ENCODE measurements at regions of chr20 and their contacts with region 1.

Region 1: DNA sequence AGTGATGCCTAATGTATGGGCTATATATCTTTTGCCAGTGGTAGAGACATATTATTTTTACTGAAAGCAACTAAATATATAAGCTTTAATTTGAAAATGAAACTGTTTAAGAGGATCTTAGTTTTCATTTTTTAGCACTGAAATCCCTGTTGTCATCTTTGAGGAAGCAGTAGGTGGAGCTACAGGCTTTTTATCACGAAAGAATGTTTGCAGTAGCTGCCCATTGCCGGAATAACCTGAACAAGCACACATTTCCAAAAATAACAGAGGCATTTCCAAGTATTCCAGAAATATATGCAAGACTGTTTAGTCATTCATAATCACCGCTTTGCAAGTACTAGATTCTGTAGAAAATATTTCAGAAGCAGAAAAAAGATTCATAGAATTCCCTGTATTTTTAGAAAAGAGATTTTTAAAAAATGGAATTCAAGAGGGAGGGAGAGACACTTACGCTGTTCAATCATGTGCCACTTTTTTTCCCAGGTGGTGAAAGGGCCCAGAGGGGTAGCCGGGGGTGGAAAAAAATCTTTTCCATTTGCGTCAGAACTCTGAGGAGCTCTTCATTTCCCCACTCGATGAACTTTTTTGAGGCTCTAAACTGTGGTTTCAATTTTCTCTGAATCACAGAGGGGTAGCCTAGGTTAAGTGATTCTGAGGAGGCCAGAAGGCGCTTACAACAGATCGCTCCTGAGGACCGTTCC is 142.5 kb upstream of the FERMT1 start:
- DNase-seq: peak; percentile 73
- ATAC-seq: peak; percentile 92
- H3K4me3 ChIP-seq: no peak overlapping the region
- H3K27ac ChIP-seq: no peak overlapping the region
- H3K4me1 ChIP-seq: no peaks in the 10 kb centered on the region
- H3K27me3 ChIP-seq: no peaks in the 10 kb centered on the region; the same call in 1 of the 2 replicates
- CTCF ChIP-seq: peak; percentile 67
- POLR2A ChIP-seq: no peak
- RAD21 ChIP-seq: peak; percentile 71

Region 2: DNA sequence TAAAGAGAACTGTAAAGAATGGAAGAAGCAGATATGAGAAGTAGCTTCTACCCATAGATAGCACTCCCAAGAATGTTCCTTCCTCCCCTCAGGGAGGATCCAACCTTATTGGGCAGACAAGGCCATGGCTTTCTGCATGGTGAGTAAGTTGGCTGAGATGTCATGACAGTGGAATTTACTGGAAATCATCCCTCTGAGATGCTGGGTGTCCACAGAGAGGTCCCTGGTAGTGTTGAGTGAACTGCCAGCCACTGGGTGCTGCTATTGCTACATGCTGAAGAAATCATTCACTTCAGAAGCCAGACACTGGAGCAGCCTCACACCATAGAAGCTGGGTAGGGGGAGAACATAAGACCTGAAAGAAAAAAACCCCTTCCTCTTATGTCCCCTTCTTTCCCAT is 96.1 kb before region 1 on chr20:
- CTCF ChIA-PET with region 1: no interaction called
- POLR2A ChIA-PET with region 1: no interaction called
- dilution Hi-C with region 1: no loop called
- in situ Hi-C with region 1: no loop called
- intact Hi-C with region 1: no loop called
- DNase-seq: peak; percentile 12
- ATAC-seq: 0 out of 2 replicates have a peak, but pooled peaks have one; percentile 27
- H3K4me3 ChIP-seq: no peak overlapping the region
- H3K27ac ChIP-seq: no peak overlapping the region
- H3K4me1 ChIP-seq: no peaks in the 10 kb centered on the region
- H3K27me3 ChIP-seq: no peaks in the 10 kb centered on the region; the same call in 1 of the 2 replicates
- CTCF ChIP-seq: 0 out of 2 replicates have a peak, but pooled peaks have one; percentile 14
- POLR2A ChIP-seq: no peak
- RAD21 ChIP-seq: peak; percentile 20; the same call in 1 of the 2 replicates

Region 3: DNA sequence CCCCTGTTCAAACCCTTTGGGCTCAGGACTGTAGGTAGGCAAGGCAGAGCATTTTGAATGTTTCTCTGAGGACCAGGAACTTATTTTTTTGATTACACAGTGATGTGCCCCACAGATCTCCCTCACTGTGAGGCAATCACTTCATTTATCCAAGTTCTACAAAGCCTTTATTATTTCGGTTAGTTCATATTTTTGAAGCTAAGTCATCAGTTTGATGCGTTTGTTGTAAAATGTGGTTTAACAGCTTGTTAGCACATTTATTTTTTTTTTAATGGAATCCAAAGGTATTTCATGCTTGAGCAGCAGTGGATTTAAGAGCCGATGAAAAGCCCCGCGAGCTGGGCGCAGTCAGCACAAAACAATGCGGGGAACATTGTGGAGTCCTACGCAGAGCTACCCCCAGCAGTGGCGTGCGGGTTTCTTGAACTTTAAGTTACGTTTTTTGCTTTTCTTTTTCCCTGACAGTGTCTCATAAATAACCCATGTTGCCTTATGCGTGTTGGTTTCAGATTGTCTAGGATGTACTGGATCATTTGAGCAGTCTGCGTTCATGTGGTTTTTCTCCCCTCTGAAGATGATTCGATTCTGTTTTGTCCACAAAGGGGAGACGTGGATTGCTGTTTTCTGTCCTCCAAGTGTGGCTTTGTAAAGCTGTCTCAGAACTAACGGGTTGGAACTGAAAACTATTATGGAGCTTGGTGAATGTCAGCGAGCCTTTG is 268.6 kb after region 1 on chr20:
- CTCF ChIA-PET with region 1: interaction called, 5 read pairs
- POLR2A ChIA-PET with region 1: no interaction called
- dilution Hi-C with region 1: no loop called
- in situ Hi-C with region 1: no loop called
- intact Hi-C with region 1: loop called (anchors 1 kb)
- DNase-seq: peak; percentile 88
- ATAC-seq: peak; percentile 85
- H3K4me3 ChIP-seq: peak overlapping the region; percentile 51
- H3K27ac ChIP-seq: peak overlapping the region; percentile 90
- H3K4me1 ChIP-seq: peaks cover 7% of the 10 kb centered on the region
- H3K27me3 ChIP-seq: no peaks in the 10 kb centered on the region
- CTCF ChIP-seq: 0 out of 2 replicates have a peak, but pooled peaks have one; percentile 3
- POLR2A ChIP-seq: no peak
- RAD21 ChIP-seq: peak; percentile 13; the same call in 1 of the 2 replicates

Region 4: GRCh38 chr20:6583134-6583738 is 317.9 kb after region 1 on chr20:
- CTCF ChIA-PET with region 1: no interaction called
- POLR2A ChIA-PET with region 1: no interaction called
- dilution Hi-C with region 1: no loop called
- in situ Hi-C with region 1: no loop called
- intact Hi-C with region 1: loop called (anchors 1 kb)
- DNase-seq: peak; percentile 55
- ATAC-seq: peak; percentile 93
- H3K4me3 ChIP-seq: no peak overlapping the region
- H3K27ac ChIP-seq: no peak overlapping the region
- H3K4me1 ChIP-seq: peaks cover 6% of the 10 kb centered on the region
- H3K27me3 ChIP-seq: no peaks in the 10 kb centered on the region
- CTCF ChIP-seq: peak; percentile 71
- POLR2A ChIP-seq: no peak
- RAD21 ChIP-seq: peak; percentile 68

Region 5: GRCh38 chr20:6636209-6637159 is 371.1 kb after region 1 on chr20:
- CTCF ChIA-PET with region 1: no interaction called
- POLR2A ChIA-PET with region 1: no interaction called
- dilution Hi-C with region 1: no loop called
- in situ Hi-C with region 1: no loop called
- intact Hi-C with region 1: loop called (anchors 1 kb)
- DNase-seq: peak; percentile 69
- ATAC-seq: peak; percentile 87
- H3K4me3 ChIP-seq: no peak overlapping the region
- H3K27ac ChIP-seq: no peak overlapping the region
- H3K4me1 ChIP-seq: no peaks in the 10 kb centered on the region
- H3K27me3 ChIP-seq: peaks cover 8% of the 10 kb centered on the region
- CTCF ChIP-seq: peak; percentile 66
- POLR2A ChIP-seq: no peak
- RAD21 ChIP-seq: peak; percentile 64

Region 6: DNA sequence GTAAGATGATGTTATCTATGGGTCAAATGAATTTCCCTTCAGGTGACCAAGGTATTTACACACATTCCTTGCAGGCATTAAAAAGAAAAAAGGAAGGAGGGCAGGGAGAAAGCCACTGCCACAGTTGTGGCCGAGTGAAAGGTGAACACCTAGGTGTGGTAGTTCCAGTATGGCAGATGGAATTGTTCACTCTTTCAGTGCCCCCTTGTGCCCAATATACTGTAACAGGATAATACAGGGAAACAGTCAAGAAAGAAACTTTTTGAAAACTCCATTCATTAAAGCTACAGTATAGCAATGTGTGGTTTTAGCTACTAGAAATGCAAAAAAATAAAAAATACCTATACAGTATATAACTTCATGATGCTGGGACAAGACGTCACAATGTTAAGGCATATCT is 554.3 kb after region 1 on chr20:
- CTCF ChIA-PET with region 1: no interaction called
- POLR2A ChIA-PET with region 1: no interaction called
- dilution Hi-C with region 1: no loop called
- in situ Hi-C with region 1: no loop called
- intact Hi-C with region 1: loop called (anchors 5 kb)
- DNase-seq: no peak
- ATAC-seq: no peak
- H3K4me3 ChIP-seq: no peak overlapping the region
- H3K27ac ChIP-seq: no peak overlapping the region
- H3K4me1 ChIP-seq: no peaks in the 10 kb centered on the region
- H3K27me3 ChIP-seq: no peaks in the 10 kb centered on the region
- CTCF ChIP-seq: peak; percentile 16; the same call in 1 of the 2 replicates
- POLR2A ChIP-seq: no peak
- RAD21 ChIP-seq: no peak

Region 7: GRCh38 chr20:7285918-7286556 is 1020.7 kb after region 1 on chr20:
- CTCF ChIA-PET with region 1: interaction called, 3 read pairs
- POLR2A ChIA-PET with region 1: no interaction called
- dilution Hi-C with region 1: no loop called
- in situ Hi-C with region 1: no loop called
- intact Hi-C with region 1: loop called (anchors 1 kb)
- DNase-seq: peak; percentile 75
- ATAC-seq: peak; percentile 80
- H3K4me3 ChIP-seq: no peak overlapping the region
- H3K27ac ChIP-seq: no peak overlapping the region
- H3K4me1 ChIP-seq: no peaks in the 10 kb centered on the region
- H3K27me3 ChIP-seq: no peaks in the 10 kb centered on the region
- CTCF ChIP-seq: peak; percentile 78
- POLR2A ChIP-seq: no peak
- RAD21 ChIP-seq: peak; percentile 66

Region 8: DNA sequence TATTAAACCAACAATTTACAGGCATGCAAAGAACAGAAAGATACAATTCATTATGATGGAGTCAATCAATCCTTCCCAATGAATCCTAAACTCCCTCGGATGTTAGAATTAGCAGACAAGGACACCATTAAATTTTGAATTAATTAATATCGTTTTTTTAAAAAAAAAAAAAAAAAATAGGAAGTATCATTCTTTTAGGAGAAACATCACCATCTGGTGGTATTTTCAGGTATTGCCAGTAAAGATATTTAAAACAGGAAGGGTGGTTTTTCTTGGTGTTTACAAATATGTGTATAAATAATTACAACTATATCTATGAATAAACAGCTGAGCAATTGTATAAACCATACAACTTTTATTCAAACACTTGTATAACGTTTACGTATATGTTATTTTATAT is 1110.6 kb after region 1 on chr20:
- CTCF ChIA-PET with region 1: no interaction called
- POLR2A ChIA-PET with region 1: no interaction called
- dilution Hi-C with region 1: no loop called
- in situ Hi-C with region 1: no loop called
- intact Hi-C with region 1: loop called (anchors 2 kb)
- DNase-seq: peak; percentile 17
- ATAC-seq: no peak
- H3K4me3 ChIP-seq: no peak overlapping the region
- H3K27ac ChIP-seq: no peak overlapping the region
- H3K4me1 ChIP-seq: no peaks in the 10 kb centered on the region
- H3K27me3 ChIP-seq: no peaks in the 10 kb centered on the region
- CTCF ChIP-seq: peak; percentile 55
- POLR2A ChIP-seq: no peak
- RAD21 ChIP-seq: peak; percentile 36; the same call in 1 of the 2 replicates

Region 9: DNA sequence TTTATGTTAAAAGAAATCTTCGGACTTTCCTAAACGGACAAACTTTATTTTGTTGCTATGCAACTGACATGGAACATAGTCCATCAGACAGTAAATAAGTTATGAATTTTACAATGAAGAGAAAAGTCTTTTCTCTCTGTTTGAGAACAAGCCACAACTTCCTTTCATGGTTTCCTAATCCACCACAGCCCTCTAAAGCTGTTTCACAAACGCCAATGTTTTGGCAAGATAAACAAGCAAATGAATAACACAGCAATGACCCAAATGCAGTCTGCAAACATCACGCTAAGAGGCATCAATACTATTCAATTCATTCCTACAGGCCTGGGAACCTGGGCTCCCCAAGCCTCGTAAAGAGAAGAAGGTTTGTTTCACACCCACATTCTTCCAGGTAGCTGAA is 1614.5 kb after region 1 on chr20:
- CTCF ChIA-PET with region 1: no interaction called
- POLR2A ChIA-PET with region 1: no interaction called
- dilution Hi-C with region 1: no loop called
- in situ Hi-C with region 1: no loop called
- intact Hi-C with region 1: no loop called
- DNase-seq: peak; percentile 43
- ATAC-seq: peak; percentile 90
- H3K4me3 ChIP-seq: no peak overlapping the region
- H3K27ac ChIP-seq: peak overlapping the region; percentile 50; the same call in 1 of the 2 replicates
- H3K4me1 ChIP-seq: no peaks in the 10 kb centered on the region
- H3K27me3 ChIP-seq: no peaks in the 10 kb centered on the region
- CTCF ChIP-seq: no peak
- POLR2A ChIP-seq: no peak
- RAD21 ChIP-seq: no peak